WTC11 (cell line): ENCODE measurements at regions of chr7 and their contacts with region 1.

Region 1: DNA sequence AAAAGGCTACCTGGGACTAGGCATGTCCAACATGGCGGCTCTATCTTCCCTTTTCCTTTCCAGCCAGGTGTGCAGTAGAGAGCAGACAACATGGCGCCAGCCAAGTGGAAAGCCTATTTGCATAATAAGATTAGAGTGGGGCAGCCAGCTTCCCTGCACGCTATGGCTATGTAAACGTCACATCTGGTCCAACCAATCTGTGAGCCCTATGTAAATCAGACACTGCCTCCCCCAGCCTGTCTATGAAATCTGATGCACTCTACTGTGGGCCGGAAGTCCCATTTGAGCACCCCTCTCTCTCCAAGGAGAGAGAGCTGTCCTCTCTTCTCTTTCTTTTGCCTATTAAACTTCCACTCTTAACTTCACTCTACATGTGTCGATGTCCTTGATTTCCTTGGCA is 984.9 kb upstream of the AUTS2 start:
- DNase-seq: no peak
- ATAC-seq: no peak
- H3K4me3 Mint-ChIP-seq: no peak overlapping the region
- H3K27ac Mint-ChIP-seq: no peak overlapping the region
- H3K4me1 Mint-ChIP-seq: peaks cover 25% of the 10 kb centered on the region
- H3K27me3 Mint-ChIP-seq: peaks cover 5% of the 10 kb centered on the region; the same call in 1 of the 2 replicates
- CTCF ChIP-seq: no peak

Region 2: GRCh38 chr7:68699090-68699711 is 85.8 kb after region 1 on chr7:
- CTCF ChIA-PET with region 1: no interaction called
- POLR2A ChIA-PET with region 1: interaction called, 16 read pairs
- DNase-seq: no peak
- ATAC-seq: no peak
- H3K4me3 Mint-ChIP-seq: no peak overlapping the region
- H3K27ac Mint-ChIP-seq: no peak overlapping the region
- H3K4me1 Mint-ChIP-seq: peaks cover 18% of the 10 kb centered on the region
- H3K27me3 Mint-ChIP-seq: no peaks in the 10 kb centered on the region; the same call in 1 of the 2 replicates
- CTCF ChIP-seq: no peak